Dorsolateral prefrontal cortex (tissue), 120 donors: ENCODE measurements at regions of chr2 and their contacts with region 1.

Region 1: DNA sequence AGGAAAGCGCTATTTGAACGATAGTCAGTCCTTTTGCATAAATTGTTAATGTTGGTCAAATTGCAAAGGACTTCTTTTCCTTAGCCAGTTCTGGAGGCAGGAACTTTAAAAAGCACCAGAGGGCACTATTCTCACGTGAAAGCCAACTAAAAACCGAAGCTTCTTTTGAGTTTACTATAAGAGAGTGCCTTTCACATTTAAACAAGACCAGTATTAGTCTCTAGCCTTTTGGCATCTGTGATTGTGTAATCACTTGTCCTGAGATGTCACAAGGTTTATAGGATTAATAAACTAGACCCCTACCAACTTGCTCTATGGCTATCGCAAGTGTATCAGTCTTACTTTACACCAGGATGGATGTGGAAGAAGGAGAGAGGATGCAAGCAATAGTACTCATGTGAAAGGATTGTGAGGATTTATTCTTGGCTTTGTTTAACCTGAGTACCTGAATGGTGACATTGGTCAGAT is 14.4 kb upstream of the STAT4 start:
- DNase-seq: no peak
- H3K4me3 ChIP-seq: peak overlapping the region in 21 of 59 donors; percentile 1 to 56 (median 21)
- H3K27ac ChIP-seq: peak overlapping the region in 2 of 59 donors; percentile 21 to 46
- H3K27me3 ChIP-seq: peaks cover 0 to 2% (median 0%) of the 10 kb centered on the region in 45 donors
- CTCF ChIP-seq: peak; percentile 59 to 90 (median 74)

Region 2: DNA sequence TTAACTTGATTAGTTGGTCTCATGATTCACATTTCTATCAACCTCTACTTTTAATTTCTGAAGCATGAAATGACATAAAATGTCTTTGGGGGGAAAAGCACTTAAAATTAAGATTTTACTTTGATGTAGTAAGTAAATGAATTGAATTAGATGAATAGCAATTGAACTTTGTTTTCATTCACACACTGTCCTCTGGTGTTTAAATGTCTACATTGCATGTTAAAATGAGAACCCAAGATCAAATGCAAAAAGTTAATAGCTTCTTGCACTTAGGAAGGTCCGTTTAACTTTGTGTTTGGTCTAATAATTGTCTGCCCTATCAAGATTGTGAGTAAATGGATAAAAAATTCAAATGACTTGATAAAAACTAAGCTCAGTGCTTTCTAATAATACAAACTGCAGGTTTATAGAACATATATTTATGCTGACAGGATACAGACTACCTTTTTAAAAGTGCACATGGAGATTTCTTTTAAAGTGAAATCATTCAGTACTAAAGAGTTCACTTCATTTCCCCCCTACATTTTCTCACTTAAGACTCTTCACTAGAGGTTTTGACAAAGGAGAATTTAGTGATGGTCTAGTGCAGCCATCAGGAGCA is 356.5 kb after region 1 on chr2:
- intact Hi-C with region 1: loop called (anchors 2 to 10 kb)
- DNase-seq: no peak
- H3K4me3 ChIP-seq: no peak overlapping the region
- H3K27ac ChIP-seq: no peak overlapping the region
- H3K27me3 ChIP-seq: peaks cover 0 to 3% (median 0%) of the 10 kb centered on the region in 45 donors
- CTCF ChIP-seq: peak; percentile 48 to 92 (median 81)